ENCODE measurements at regions of chr2 and their contacts with region 1.

Region 1: DNA sequence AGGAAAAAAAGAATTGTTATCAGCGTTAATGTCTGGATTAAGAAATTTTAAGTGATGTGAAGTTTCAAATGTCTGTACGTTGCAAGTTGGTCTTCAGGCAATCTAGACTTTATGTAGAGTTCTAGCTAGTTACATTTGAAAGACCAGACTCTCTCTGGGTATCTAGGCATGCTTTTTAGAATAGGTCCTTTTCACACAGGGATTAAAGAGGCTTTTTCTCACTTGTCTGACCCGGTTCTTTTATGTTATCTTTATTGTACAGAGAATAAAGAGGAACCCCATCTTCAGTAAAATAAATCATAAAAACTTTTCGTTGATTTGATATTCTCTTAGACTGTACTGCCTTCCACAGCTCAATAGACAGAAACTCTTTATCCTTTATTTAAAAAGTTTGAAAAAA is 8.5 kb upstream of the EML6 start:
- DNase-seq: no peak
- H3K4me3 Mint-ChIP-seq: no peak overlapping the region
- H3K27ac Mint-ChIP-seq: no peak overlapping the region
- H3K4me1 Mint-ChIP-seq: no peaks in the 10 kb centered on the region
- H3K27me3 Mint-ChIP-seq: peaks cover 27% of the 10 kb centered on the region

Region 2: GRCh38 chr2:54755641-54756326 is 40.8 kb after region 1 on chr2:
- CTCF ChIA-PET with region 1: no interaction called
- POLR2A ChIA-PET with region 1: no interaction called
- intact Hi-C with region 1: loop called (anchors 1 kb)
- DNase-seq: no peak
- H3K4me3 Mint-ChIP-seq: no peak overlapping the region
- H3K27ac Mint-ChIP-seq: no peak overlapping the region
- H3K4me1 Mint-ChIP-seq: peaks cover 4% of the 10 kb centered on the region
- H3K27me3 Mint-ChIP-seq: no peaks in the 10 kb centered on the region

Measured in activated CD4-positive, alpha-beta memory T cell treated with anti-CD3 and anti-CD28 coated beads for 36 hours (primary cell).